Transverse colon (tissue), 4 donors: ENCODE measurements at regions of chr9 and their contacts with region 1.

Region 1: DNA sequence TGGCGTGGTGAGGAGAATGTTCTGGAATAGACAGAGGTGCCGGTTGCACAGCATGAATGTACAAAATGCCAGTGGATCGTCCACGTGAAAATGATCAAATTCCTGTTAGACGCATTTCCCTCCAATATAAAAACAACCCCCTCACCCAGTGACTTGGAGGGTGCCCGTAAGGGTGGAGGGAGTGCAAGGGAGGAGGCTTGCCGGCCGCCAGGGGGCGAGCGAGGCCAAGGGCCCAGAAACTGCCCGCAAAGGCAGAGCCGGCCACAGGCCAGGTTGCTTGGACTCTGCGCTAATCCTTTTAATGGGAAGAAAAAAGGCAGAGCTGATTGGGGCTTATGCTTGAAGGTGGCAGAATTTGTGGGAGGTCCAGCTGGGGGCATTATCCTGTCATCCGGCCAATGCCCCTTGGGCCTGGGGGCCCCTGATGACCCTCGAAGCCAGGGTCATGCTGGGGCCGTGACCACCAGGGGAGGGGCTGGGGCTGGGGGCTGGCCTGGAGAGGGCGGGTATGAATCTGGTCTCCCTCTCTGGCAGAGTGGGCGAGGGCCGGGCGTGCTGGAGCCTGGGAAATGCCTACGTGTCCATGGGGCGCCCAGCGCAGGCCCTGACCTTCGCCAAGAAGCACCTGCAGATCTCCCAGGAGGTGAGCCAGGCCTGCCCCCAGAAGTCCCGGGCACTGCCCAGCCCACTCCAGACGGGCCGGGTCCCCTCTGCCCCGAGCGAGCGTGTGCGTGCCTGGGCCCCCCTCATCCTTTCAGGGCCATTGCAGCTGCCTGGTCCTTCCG is 12.0 kb downstream of the GPSM1 start:
- DNase-seq: peak; percentile 79
- H3K4me3 ChIP-seq: no peak overlapping the region
- H3K27ac ChIP-seq: no peak overlapping the region
- H3K4me1 ChIP-seq: peaks cover 11 to 16% (median 15%) of the 10 kb centered on the region in 4 donors
- H3K27me3 ChIP-seq: peaks cover 8% of the 10 kb centered on the region
- CTCF ChIP-seq: peak; percentile 89 to 96 (median 93)
- EP300 ChIP-seq: no peak
- POLR2A ChIP-seq: no peak

Region 2: GRCh38 chr9:136363606-136364370 is 24.4 kb after region 1 on chr9 and contains the start of gene DNLZ:
- in situ Hi-C with region 1: no loop called
- intact Hi-C with region 1: loop called (anchors 2 kb)
- DNase-seq: peak; percentile 89
- H3K4me3 ChIP-seq: peak within 1 kb of the TSS; percentile 62 to 100 (median 87)
- H3K27ac ChIP-seq: peak within 1 kb of the TSS; percentile 90 to 97 (median 96)
- H3K4me1 ChIP-seq: peaks cover 18 to 31% (median 26%) of the 10 kb centered on the region in 4 donors
- H3K27me3 ChIP-seq: no peaks in the 10 kb centered on the region
- CTCF ChIP-seq: peak; percentile 86 to 99 (median 99)
- EP300 ChIP-seq: no peak
- POLR2A ChIP-seq: no peak
- total RNA-seq, gene DNLZ: 6.7 to 17.3 (median 10.4) TPM

Region 3: GRCh38 chr9:136400038-136400834 is 60.9 kb after region 1 on chr9 and contains the start of gene SNAPC4:
- in situ Hi-C with region 1: no loop called
- intact Hi-C with region 1: loop called (anchors 10 kb)
- DNase-seq: peak; percentile 89
- H3K4me3 ChIP-seq: peak within 1 kb of the TSS; percentile 70 to 98 (median 94)
- H3K27ac ChIP-seq: peak within 1 kb of the TSS; percentile 66 to 81 (median 76)
- H3K4me1 ChIP-seq: peaks cover 10 to 39% (median 31%) of the 10 kb centered on the region in 4 donors
- H3K27me3 ChIP-seq: no peaks in the 10 kb centered on the region
- CTCF ChIP-seq: peak; percentile 74 to 98 (median 90)
- EP300 ChIP-seq: no peak
- POLR2A ChIP-seq: peak; percentile 35
- total RNA-seq, gene SNAPC4: 6.0 to 14.5 (median 10.1) TPM